HAP-1 (cell line): ENCODE measurements at regions of chr5 and their contacts with region 1.

Region 1: GRCh38 chr5:155943516-155944407 is 383.2 kb upstream of the SGCD start:
- DNase-seq: peak; percentile 31 to 63
- H3K4me3 ChIP-seq: no peak overlapping the region
- H3K4me1 ChIP-seq: no peaks in the 10 kb centered on the region
- H3K27me3 ChIP-seq: no peaks in the 10 kb centered on the region

Region 2: DNA sequence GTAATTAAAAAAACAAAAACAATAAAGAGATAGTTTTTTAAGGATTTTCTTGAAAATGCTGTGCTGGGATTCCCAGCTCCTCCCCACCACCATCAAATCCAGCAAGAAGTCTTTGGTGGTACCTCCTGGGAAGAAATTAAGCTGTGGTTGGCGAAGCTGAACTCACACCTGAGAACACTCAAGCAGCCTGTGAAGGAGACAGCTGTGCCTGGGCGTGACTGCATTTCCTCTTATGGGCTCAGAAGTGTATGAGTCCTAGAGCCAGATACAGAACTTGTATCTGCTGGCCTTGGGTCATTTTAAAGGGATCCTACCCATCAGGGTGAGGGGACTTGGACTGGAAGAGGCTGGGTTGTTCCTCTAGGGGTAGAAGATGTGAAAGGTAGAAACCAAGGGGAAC is 178.0 kb before region 1 on chr5:
- in situ Hi-C with region 1: no loop called
- DNase-seq: no peak
- H3K4me3 ChIP-seq: no peak overlapping the region
- H3K4me1 ChIP-seq: no peaks in the 10 kb centered on the region
- H3K27me3 ChIP-seq: no peaks in the 10 kb centered on the region

Region 3: DNA sequence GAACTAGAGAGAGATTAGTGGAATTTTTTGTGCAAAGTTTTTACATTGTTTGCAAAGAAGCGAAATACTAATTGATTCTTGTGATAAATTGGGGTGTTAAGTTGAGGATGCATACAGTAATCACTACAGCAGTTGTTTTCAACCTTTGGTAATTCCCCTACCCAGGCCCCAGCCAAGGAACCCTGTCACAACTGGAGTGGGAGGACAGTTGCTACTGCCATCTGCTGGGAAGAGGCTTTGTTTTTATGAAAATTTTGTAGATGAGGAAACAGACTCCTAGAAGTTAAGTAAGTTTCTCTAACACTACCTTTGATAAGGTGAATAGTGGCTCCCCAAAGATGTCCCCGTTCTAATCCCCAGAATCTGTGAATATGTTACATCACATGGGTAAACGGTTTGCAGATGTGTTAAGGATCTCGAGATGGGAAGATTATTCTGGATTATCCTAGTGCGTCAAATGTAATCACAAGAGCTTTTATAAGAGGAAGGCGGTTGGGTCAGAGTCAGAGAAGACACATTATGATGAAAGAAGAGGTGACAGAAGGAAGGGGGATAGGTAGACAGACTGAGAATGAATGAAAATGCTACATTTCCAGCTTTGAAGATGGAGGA is 872.3 kb after region 1 on chr5:
- in situ Hi-C with region 1: loop called (anchors 10 kb)
- DNase-seq: peak; percentile 48 to 72
- H3K4me3 ChIP-seq: no peak overlapping the region
- H3K4me1 ChIP-seq: no peaks in the 10 kb centered on the region
- H3K27me3 ChIP-seq: no peaks in the 10 kb centered on the region